Psoas muscle (tissue), 8 donors: ENCODE measurements at regions of chr9 and their contacts with region 1.

Region 1: GRCh38 chr9:70639853-70640814 is 225.7 kb upstream of the KLF9 start:
- DNase-seq: no peak
- ATAC-seq: peak; percentile 44 to 80 (median 54)
- H3K4me3 ChIP-seq: no peak overlapping the region
- H3K27ac ChIP-seq: no peak overlapping the region
- H3K4me1 ChIP-seq: no peaks in the 10 kb centered on the region
- H3K27me3 ChIP-seq: peaks cover 0 to 3% (median 0%) of the 10 kb centered on the region in 3 donors
- CTCF ChIP-seq: peak; percentile 68

Region 2: DNA sequence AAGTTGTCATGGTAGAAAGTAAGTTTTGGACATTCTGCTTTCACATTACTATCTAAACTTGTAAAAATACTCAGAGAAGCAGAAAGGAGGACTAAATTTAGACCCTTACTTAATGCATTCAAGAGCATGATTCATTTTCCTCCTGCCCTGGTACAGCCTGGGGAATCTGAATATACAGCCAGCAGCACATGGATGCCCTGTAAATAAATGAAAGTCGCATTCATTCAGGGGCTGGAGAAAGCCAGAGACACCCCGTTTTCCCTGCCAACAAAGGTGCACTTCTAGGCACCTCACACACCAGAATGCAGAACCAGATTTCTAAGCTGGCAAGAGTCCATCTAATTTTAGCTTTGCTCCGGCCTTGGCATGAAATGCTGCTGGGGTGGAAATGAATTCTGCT is 52.9 kb before region 1 on chr9:
- intact Hi-C with region 1: no loop called
- DNase-seq: no peak
- ATAC-seq: peak; percentile 81 to 93 (median 90)
- H3K4me3 ChIP-seq: peak overlapping the region; percentile 24
- H3K27ac ChIP-seq: peak overlapping the region; percentile 82
- H3K4me1 ChIP-seq: peaks cover 30% of the 10 kb centered on the region
- H3K27me3 ChIP-seq: no peaks in the 10 kb centered on the region
- CTCF ChIP-seq: no peak

Region 3: GRCh38 chr9:70852711-70853240 is 212.6 kb after region 1 on chr9:
- intact Hi-C with region 1: no loop called
- DNase-seq: no peak
- ATAC-seq: no peak
- H3K4me3 ChIP-seq: no peak overlapping the region
- H3K27ac ChIP-seq: no peak overlapping the region
- H3K4me1 ChIP-seq: no peaks in the 10 kb centered on the region
- H3K27me3 ChIP-seq: no peaks in the 10 kb centered on the region
- CTCF ChIP-seq: no peak

Region 4: GRCh38 chr9:71001780-71002386 is 361.7 kb after region 1 on chr9:
- intact Hi-C with region 1: loop called (anchors 5 to 10 kb)
- DNase-seq: no peak
- ATAC-seq: no peak
- H3K4me3 ChIP-seq: no peak overlapping the region
- H3K27ac ChIP-seq: no peak overlapping the region
- H3K4me1 ChIP-seq: no peaks in the 10 kb centered on the region
- H3K27me3 ChIP-seq: peaks cover 0 to 2% (median 0%) of the 10 kb centered on the region in 3 donors
- CTCF ChIP-seq: peak; percentile 38

Region 5: DNA sequence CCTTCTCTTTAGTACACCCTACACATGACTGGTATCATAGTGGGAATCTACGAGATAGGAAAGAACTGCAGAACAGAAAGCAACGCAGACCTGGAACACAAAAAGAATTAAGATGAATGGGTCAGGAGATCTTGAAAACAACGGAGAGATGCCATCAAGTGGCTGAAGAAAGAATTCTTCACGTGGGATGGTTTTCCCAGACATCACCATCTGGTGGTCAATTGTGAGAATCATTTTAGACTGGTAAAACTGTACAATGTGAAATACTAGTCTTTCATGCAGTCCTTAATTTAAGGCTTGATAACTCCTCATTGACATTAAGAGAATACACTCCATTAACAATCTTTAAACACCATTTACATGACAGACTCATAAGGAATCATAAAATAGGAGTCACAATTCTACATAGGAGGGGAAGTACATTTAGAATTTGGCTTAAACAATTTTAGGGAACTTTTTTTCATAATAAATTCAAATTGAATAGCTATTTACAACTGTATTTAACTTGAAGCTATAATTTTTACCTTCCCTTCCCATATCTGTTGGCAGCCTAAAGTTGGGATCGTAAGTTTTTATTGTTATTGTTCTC is 609.7 kb after region 1 on chr9:
- intact Hi-C with region 1: loop called (anchors 2 to 5 kb)
- DNase-seq: no peak
- ATAC-seq: peak in 2 of 4 donors; percentile 38 to 78
- H3K4me3 ChIP-seq: no peak overlapping the region
- H3K27ac ChIP-seq: no peak overlapping the region
- H3K4me1 ChIP-seq: no peaks in the 10 kb centered on the region
- H3K27me3 ChIP-seq: no peaks in the 10 kb centered on the region
- CTCF ChIP-seq: peak; percentile 64